Dorsolateral prefrontal cortex (tissue), 120 donors: ENCODE measurements at regions of chr12 and their contacts with region 1.

Region 1: DNA sequence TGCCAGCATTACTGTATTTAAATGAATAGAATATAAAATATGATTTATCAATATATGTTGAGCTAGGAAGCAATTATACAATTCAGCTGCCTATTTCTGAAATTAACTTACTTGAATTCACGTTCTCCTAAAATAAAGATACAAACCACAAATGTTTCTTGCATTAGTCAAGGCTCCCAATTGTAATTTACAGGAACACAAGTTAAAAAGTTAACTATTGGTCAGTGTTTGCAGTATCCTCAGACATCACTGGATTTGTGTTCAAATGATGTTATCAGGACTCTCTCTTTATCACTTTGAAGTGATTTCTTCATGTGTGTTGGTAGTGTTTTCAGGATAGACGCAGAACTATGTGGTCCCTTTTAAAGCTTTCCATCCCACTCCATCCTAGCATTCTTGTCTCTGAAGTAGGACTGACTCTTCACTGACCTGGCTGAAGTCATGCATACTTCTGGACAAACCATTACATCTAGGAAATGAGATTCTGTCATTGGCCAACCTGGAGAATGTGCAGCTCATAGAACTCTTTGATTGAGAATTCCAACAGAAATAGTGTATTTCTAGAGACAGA is 156.1 kb downstream of the KICS2 start:
- DNase-seq: no peak
- H3K4me3 ChIP-seq: no peak overlapping the region
- H3K27ac ChIP-seq: no peak overlapping the region
- H3K27me3 ChIP-seq: no peaks in the 10 kb centered on the region
- CTCF ChIP-seq: no peak

Region 2: GRCh38 chr12:63882844-63883243 is 183.1 kb before region 1 on chr12:
- intact Hi-C with region 1: no loop called
- DNase-seq: no peak
- H3K4me3 ChIP-seq: no peak overlapping the region
- H3K27ac ChIP-seq: peak overlapping the region in 3 of 59 donors; percentile 11 to 29 (median 18)
- H3K27me3 ChIP-seq: no peaks in the 10 kb centered on the region
- CTCF ChIP-seq: no peak

Region 3: DNA sequence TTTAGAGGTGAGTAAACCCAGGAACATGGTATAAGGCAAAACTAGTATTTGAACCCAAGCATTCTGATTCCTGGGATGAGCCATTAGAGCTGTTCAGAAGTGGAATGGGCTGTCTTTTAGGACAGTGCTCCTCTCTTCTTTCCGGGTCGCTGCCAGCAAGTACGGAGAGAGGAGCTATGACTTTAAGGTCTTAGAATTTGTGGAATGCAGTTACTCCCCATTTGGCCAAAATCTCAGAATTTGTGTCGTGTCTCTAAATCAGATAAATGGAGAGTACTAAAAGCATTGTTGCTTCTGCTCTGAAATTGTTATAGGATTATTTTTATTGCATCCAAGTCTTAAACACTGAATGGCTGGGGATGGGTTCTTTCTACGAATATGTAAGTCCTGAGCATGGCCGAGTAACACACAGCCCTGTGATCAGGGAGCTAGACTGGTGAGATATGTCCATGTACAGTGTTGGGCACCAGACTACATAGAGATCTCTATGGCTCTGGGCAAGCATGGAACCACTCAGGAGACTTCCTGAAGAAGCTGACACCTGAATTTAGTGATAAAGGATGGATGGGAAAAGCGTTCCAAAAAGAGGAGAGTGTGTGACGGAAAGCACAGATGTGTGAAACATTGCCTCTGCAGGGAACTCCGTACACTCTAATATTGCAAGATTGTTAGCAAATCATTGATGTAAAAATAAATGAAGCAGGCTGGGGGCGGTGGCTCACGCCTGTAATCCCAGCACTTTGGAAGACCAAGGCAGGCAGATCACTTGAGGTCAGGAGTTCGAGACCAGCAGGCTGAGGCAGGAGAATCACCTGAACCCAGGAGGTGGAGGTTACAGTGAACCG is 36.7 kb before region 1 on chr12:
- intact Hi-C with region 1: no loop called
- DNase-seq: no peak
- H3K4me3 ChIP-seq: no peak overlapping the region
- H3K27ac ChIP-seq: no peak overlapping the region
- H3K27me3 ChIP-seq: no peaks in the 10 kb centered on the region
- CTCF ChIP-seq: no peak

Region 4: DNA sequence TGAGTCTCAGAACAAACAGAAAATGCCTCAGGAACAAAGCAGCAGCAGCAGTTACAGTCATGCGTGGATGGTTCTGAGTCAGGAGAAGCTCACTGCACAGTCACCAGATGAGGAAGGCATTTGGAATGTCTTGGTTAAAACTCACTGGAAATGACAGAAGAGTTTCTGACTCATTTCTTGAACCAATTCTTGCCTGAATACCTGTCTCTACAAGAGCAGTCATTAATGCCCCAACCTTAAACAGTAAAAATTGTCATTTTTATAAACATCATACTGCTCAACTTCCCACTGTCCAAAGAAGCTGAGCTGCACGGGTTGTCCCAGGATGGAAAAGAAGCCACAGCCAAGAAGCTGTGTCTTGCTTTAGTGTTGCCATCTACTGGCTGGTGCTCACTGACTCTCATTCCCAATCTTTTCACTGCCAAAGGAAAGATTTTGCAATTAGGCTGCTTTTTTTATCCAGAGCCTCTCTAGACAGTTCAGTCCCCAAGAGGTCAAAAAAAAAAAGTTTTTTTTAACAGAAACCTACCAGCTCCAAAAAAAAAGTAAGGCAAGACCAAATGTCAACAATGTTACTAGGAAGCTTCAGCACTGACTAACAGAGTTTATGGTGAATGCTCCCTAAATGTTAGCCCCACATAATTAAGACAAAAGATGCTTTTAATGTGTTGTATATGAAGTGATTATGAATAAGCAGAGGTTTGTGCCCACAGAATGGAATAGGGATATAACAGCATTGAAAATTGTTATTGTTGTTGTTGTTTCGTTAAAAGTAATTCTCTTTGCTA is 115.7 kb after region 1 on chr12:
- intact Hi-C with region 1: loop called in 1 of 2 experiments (anchors 5 kb)
- DNase-seq: peak in 9 of 10 donors; percentile 5 to 72 (median 49)
- H3K4me3 ChIP-seq: peak overlapping the region in 1 of 59 donors; percentile 1
- H3K27ac ChIP-seq: peak overlapping the region in 14 of 59 donors; percentile 7 to 54 (median 30)
- H3K27me3 ChIP-seq: no peaks in the 10 kb centered on the region
- CTCF ChIP-seq: peak; percentile 45 to 87 (median 75)

Region 5: DNA sequence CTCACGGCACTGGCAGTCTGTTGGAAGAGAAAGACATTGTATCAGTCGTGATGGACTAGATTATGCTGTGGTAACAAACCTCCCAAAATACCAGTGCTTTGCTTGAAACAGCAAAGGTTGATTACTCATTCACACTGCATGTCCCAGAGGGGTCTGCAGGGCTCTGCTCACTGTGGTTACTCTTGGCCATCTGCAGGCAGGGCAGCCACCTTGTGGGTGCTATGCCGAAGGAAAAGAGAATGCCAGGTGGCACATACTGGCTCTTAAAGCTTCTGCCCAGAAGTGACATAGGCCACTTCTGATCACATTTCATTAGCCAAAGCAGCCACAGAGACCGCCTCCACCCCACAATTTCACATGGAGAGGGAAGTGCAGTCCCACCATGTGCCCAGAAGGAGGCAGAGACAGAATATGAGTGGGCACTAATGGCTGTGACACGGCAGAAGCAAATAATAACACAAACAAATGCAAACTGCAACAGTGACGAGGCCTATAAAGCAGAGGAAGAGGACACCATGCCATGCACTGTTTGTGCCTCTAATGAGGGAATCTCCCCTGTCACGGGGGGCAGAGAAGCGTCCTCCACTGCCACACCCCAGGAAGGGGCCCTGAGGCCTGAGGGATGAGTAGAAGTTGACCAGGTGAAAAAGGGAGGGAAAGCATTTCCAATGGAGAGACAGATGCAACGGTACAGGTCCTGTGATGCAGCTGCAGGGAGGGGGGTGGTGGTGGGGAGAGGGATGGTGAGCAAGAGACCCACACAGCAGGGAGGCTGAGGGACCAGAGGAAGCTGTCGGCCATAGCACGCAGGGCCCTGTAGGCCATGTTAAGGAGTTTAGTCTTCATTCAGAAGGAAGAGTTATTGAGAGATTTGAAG is 207.8 kb after region 1 on chr12:
- intact Hi-C with region 1: loop called in 1 of 2 experiments (anchors 10 kb)
- DNase-seq: no peak
- H3K4me3 ChIP-seq: no peak overlapping the region
- H3K27ac ChIP-seq: no peak overlapping the region
- H3K27me3 ChIP-seq: no peaks in the 10 kb centered on the region
- CTCF ChIP-seq: peak in 49 of 56 donors; percentile 17 to 64 (median 45)